ENCODE measurements at regions of chr18 and their contacts with region 1.

Region 1: DNA sequence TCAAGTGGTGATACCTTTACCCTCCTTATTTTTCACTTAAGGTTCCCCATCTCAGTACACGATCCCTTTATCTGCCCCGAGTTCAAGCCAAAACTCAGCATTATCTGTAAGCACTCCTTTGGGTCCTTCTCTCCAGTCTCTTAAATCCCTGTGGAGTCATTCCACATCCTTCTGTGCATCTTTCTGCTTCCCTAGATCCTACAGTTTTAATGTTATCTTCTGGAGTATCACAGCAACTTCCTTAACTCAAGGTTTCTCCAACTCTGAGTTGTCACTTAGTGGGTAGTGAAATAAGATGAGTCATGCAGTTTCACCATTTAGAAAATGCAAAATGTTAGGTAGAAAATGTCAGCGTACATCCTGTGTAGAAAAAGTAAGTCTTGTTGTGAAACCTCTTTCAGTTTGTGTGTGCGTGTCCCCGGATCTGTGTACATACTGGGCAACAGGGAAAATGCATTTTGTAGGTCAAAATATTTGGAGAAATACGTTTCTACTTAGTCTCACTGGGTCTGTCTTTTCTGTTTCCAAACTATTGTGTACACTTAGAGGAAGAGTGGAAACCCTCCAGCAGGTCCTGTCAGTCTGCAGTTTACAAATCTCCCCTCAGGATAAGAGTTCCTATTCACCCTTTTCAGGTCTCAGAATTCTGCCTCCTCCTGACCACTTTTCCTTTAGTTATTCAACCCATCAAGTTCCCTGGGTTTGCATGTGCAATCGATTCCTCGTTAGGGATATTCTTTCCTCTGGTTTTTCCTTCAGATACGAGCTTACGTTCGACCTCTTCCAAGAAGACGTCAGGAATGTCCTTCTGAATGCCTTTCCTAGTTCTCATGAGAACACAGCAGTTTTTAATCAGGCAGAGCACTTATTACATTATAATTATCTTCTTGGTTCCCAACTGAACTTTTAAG is 154.8 kb downstream of the TGIF1 start:
- DNase-seq: peak; percentile 61
- H3K4me3 ChIP-seq: peak overlapping the region; percentile 40
- H3K27ac ChIP-seq: peak overlapping the region; percentile 100
- H3K4me1 ChIP-seq: peaks cover 45% of the 10 kb centered on the region
- H3K27me3 ChIP-seq: no peaks in the 10 kb centered on the region
- CTCF ChIP-seq: no peak

Region 2: DNA sequence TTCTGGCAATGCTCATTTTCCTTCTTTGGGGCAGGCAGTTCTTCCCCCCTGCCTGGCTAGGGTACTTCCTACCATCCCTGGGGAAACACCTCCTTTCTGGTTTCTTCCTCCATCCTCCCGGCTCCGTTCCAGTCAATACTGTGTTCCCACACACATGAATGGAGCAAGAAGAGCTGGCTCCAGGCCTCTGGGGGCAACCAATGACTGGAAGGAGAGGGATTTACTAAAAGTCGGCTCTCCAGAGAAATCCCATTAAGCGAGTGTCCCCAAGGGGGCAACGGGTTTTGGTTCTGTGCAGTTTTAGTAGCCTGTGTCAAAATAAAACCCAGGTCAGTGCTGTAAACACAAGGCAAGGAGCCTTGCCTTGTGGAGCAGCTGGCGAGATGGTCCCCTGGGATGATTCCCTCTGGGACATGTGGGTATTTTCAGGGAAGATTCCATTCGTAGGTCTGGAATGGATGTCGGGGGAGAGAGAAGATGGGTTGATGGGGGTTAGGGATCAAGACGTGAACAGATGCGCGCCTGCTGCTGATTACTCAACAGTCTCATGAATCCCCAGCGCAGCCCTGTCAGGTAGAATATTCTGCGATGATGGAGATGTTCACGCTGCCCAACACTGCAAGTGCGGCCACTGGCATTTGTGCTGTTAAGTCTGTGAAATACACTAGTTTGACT is 726.0 kb before region 1 on chr18:
- CTCF ChIA-PET with region 1: no interaction called
- POLR2A ChIA-PET with region 1: interaction called, 10 read pairs
- intact Hi-C with region 1: no loop called
- DNase-seq: no peak
- H3K4me3 ChIP-seq: no peak overlapping the region
- H3K27ac ChIP-seq: no peak overlapping the region
- H3K4me1 ChIP-seq: peaks cover 27% of the 10 kb centered on the region
- H3K27me3 ChIP-seq: no peaks in the 10 kb centered on the region
- CTCF ChIP-seq: no peak

Region 3: GRCh38 chr18:3593904-3594661 is 10.7 kb before region 1 on chr18:
- CTCF ChIA-PET with region 1: interaction called, 6 read pairs
- POLR2A ChIA-PET with region 1: interaction called, 17 read pairs
- intact Hi-C with region 1: no loop called
- DNase-seq: peak; percentile 94
- H3K4me3 ChIP-seq: peak overlapping the region; percentile 41
- H3K27ac ChIP-seq: peak overlapping the region; percentile 94
- H3K4me1 ChIP-seq: peaks cover 51% of the 10 kb centered on the region
- H3K27me3 ChIP-seq: no peaks in the 10 kb centered on the region
- CTCF ChIP-seq: peak; percentile 75

Region 4: GRCh38 chr18:3652380-3653262 is 47.9 kb after region 1 on chr18:
- CTCF ChIA-PET with region 1: no interaction called
- POLR2A ChIA-PET with region 1: interaction called, 4 read pairs
- intact Hi-C with region 1: loop called (anchors 5 kb)
- DNase-seq: peak; percentile 87
- H3K4me3 ChIP-seq: no peak overlapping the region
- H3K27ac ChIP-seq: peak overlapping the region; percentile 69
- H3K4me1 ChIP-seq: peaks cover 61% of the 10 kb centered on the region
- H3K27me3 ChIP-seq: no peaks in the 10 kb centered on the region
- CTCF ChIP-seq: no peak

Region 5: DNA sequence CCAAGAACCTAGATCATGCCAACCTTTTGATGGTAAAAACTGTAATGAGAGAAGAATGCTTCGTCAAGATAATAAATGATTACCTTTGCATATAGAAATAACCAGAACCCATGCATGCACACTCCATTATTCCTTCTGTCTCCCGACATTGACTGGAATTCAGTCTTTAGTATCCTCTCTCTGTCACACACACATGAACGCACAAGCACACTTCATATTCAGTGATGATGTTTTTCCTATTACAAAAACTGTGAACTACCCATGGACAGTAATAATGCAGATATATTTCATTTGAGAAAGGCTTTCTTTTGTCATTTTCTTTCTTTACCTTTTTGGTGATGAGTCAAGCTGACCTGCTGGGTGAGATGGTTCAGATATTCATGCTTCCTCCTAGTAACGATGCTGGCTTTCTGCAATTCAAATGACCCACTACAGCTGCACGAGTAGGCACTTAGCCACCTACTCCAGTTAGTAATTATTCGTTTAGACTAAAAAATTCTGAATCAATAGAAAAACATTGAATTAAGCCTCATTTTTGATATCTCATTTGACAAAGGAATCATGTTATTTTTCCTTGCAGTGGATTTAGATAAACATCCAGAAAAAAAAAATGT is 227.4 kb after region 1 on chr18:
- CTCF ChIA-PET with region 1: no interaction called
- POLR2A ChIA-PET with region 1: no interaction called
- intact Hi-C with region 1: loop called (anchors 5 kb)
- DNase-seq: peak; percentile 78
- H3K4me3 ChIP-seq: no peak overlapping the region
- H3K27ac ChIP-seq: peak overlapping the region; percentile 98
- H3K4me1 ChIP-seq: peaks cover 84% of the 10 kb centered on the region
- H3K27me3 ChIP-seq: no peaks in the 10 kb centered on the region
- CTCF ChIP-seq: no peak

Region 6: DNA sequence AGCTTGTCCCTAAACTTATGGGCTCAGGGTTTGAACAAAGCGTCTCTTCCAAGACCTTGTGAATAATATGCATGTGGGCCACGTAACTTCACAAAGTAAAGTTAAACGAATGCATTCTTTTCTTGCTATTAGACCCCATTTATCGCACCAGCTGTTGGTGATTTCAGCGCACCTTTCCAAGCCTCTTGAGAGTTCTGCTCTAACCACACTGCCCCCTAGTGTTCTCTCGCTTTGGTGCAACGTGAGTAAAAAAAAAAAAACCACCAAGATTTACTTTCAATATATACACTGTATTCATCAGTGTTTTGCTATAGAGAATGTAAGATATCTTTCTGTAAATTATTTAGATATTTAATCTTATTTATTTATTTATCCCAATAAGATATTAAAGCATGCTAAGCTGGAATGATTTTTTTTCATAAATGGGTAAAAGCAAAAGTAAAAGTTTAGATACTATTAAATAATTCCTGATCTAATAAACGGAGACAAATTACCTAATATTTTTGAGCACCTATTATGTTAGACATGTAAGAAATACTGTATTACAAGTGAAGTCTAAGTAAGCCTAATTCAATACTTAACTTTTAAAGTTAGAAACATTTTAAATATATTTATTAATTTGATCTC is 390.8 kb after region 1 on chr18:
- CTCF ChIA-PET with region 1: no interaction called
- POLR2A ChIA-PET with region 1: no interaction called
- intact Hi-C with region 1: loop called (anchors 5 kb)
- DNase-seq: peak; percentile 93
- H3K4me3 ChIP-seq: peak overlapping the region; percentile 13
- H3K27ac ChIP-seq: peak overlapping the region; percentile 83
- H3K4me1 ChIP-seq: peaks cover 48% of the 10 kb centered on the region
- H3K27me3 ChIP-seq: no peaks in the 10 kb centered on the region
- CTCF ChIP-seq: peak; percentile 92

Measured in A673 (cell line).